ENCODE measurements at regions of chr3 and their contacts with region 1.

Region 1: GRCh38 chr3:47282424-47283192 is at the starts of genes KIF9 and KLHL18:
- DNase-seq: peak; percentile 92
- H3K4me3 Mint-ChIP-seq: peak within 1 kb of the TSS; percentile 93
- H3K27ac Mint-ChIP-seq: peak within 1 kb of the TSS; percentile 100
- H3K4me1 Mint-ChIP-seq: peaks cover 24% of the 10 kb centered on the region
- H3K27me3 Mint-ChIP-seq: no peaks in the 10 kb centered on the region
- CTCF ChIP-seq: no peak
- total RNA-seq, gene KIF9: 6.7 and 9.5 TPM in 2 replicates
- total RNA-seq, gene KLHL18: 36.4 and 36.6 TPM in 2 replicates

Region 2: DNA sequence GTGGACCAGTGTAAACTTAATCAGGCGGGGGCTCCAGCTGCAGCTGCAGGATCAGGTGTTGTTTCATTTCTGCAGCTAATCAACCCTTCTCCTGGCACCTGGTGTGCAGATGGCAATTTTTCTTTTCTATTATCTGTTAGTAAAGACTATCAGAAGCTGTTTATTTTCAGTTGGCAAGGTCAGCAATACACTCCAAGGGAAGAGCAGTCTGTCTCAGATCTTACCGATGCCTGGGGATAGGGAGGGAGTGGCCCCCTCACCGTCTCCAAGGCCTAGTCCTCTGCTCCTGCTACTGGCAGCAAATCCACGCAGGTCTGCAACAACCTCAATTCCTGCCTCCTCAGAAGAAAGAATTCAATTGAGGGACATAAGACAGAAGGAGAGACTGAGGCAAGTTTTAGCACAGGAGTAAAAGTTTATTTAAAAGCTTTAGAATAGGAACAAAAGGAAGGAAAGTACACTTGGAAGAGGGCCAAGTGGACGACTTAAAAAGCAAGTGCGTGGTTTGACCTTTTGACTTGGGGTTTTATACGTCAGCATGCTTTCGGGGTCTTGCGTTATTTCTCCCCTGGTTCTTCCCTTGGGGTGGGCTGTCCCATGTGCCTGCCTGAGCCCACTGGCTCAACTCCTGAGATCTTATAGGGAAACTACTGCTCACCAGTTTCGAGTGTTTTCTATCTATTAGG is 866.3 kb before region 1 on chr3:
- CTCF ChIA-PET with region 1: no interaction called
- POLR2A ChIA-PET with region 1: no interaction called
- intact Hi-C with region 1: no loop called
- DNase-seq: no peak
- H3K4me3 Mint-ChIP-seq: no peak overlapping the region
- H3K27ac Mint-ChIP-seq: no peak overlapping the region
- H3K4me1 Mint-ChIP-seq: no peaks in the 10 kb centered on the region
- H3K27me3 Mint-ChIP-seq: no peaks in the 10 kb centered on the region
- CTCF ChIP-seq: no peak

Region 3: DNA sequence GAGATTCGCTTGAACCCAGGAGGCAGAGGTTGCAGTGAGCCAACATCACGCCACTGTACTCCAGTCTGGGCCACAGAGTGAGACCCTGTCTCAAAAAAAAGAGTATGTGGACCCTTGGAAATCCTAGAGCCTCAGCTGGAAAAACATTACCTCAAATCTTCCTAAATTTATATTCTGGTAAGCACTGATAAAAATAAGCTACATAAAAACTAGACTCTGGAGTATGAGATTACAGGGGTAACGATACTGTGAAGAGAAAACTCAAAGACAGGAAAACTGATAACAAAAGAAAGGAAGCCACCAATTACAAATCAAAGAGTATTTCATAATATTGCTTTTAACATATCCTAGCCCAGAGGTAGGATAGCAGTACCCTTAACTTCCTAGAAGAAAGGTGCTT is 149.0 kb before region 1 on chr3:
- CTCF ChIA-PET with region 1: no interaction called
- POLR2A ChIA-PET with region 1: no interaction called
- intact Hi-C with region 1: no loop called
- DNase-seq: no peak
- H3K4me3 Mint-ChIP-seq: no peak overlapping the region
- H3K27ac Mint-ChIP-seq: no peak overlapping the region
- H3K4me1 Mint-ChIP-seq: peaks cover 11% of the 10 kb centered on the region
- H3K27me3 Mint-ChIP-seq: no peaks in the 10 kb centered on the region
- CTCF ChIP-seq: no peak

Region 4: DNA sequence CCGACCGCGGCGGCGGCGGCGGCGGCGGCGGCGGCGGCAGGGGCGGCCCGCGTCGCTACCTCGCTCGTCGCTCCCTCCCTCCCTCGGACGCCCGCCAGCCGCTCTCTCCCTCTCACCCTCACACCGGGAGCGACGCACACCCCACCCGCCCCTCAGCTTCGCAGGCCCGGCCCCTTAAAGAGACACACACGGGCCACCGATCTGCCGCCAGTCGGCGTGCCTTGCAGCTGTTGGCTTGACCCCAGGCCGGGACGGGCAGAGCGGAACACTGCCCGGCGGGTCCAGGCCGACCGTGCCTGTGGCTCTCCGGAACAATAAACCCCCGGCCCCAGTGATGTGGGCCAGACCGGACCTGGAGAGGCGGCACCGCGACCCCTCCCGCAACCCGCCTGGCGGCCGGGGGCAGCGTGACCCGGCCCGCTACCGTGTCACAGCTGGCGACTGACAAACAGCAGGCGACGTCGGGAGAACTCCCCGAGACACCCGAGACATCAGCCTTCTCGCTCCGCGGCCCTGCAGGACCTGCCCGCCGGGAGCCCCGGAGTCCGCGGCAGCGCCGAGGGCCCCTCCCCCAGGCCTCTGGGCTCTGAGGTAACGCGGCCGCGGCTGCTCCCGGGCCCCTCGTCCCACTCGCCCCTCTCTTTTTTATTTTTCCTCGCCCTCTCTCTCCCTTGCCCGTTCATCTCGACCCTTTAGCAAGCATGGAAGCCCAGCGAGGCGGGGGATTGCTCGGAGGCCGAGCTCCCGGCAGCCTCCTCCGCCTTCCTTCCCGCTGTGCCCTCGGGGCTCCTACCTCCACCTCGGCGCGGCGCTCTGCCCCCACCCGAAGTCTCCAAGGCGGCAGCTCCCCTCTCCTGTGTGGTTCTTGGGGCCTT is 118.4 kb before region 1 on chr3 and contains the start of gene SETD2:
- CTCF ChIA-PET with region 1: no interaction called
- POLR2A ChIA-PET with region 1: interaction called, 29 read pairs
- intact Hi-C with region 1: loop called (anchors 10 kb)
- DNase-seq: peak; percentile 95
- H3K4me3 Mint-ChIP-seq: peak within 1 kb of the TSS; percentile 81
- H3K27ac Mint-ChIP-seq: peak within 1 kb of the TSS; percentile 87
- H3K4me1 Mint-ChIP-seq: peaks cover 27% of the 10 kb centered on the region
- H3K27me3 Mint-ChIP-seq: no peaks in the 10 kb centered on the region
- CTCF ChIP-seq: no peak
- total RNA-seq, gene SETD2: 35.8 and 38.0 TPM in 2 replicates

Region 5: DNA sequence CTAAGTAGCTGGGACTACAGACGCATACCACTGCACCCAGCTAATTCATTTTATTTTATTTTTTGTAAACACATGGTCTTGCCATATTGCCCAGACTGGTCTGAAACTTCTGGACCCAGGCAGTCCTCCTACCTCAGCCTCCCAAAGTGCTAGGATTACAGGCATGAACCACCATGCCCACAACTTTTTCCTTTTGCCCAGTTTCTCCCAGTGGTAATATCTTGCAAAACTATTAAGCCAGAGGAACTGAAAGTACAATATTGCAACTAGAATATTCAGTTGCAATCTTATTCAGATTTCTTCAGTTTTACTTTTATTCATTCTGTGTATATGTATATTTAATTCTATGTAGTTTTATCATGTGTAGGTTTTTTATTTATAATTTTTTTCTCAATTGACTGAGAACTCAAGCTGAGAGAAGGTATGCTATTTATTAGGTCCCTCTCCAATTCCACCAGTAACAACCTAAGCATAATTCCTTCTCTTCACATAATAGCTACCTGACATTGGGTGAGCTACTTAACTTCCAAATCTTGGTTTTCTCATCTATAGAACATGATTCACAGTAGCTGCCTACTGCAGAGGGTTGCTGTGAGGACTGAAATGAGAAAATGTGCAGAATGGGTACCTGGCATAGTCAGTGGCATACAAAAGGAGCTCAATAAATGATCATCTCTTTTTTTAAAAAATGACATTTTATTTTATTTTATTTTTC is 30.9 kb after region 1 on chr3:
- CTCF ChIA-PET with region 1: no interaction called
- POLR2A ChIA-PET with region 1: interaction called, 11 read pairs
- intact Hi-C with region 1: no loop called
- DNase-seq: no peak
- H3K4me3 Mint-ChIP-seq: no peak overlapping the region
- H3K27ac Mint-ChIP-seq: peak overlapping the region; percentile 61
- H3K4me1 Mint-ChIP-seq: peaks cover 23% of the 10 kb centered on the region
- H3K27me3 Mint-ChIP-seq: no peaks in the 10 kb centered on the region
- CTCF ChIP-seq: no peak

Measured in MCF 10A (cell line).